Activated B cell treated with CpG ODN at 0.5 μM for 24 hours (primary cell): ENCODE measurements at regions of chr6 and their contacts with region 1.

Region 1: DNA sequence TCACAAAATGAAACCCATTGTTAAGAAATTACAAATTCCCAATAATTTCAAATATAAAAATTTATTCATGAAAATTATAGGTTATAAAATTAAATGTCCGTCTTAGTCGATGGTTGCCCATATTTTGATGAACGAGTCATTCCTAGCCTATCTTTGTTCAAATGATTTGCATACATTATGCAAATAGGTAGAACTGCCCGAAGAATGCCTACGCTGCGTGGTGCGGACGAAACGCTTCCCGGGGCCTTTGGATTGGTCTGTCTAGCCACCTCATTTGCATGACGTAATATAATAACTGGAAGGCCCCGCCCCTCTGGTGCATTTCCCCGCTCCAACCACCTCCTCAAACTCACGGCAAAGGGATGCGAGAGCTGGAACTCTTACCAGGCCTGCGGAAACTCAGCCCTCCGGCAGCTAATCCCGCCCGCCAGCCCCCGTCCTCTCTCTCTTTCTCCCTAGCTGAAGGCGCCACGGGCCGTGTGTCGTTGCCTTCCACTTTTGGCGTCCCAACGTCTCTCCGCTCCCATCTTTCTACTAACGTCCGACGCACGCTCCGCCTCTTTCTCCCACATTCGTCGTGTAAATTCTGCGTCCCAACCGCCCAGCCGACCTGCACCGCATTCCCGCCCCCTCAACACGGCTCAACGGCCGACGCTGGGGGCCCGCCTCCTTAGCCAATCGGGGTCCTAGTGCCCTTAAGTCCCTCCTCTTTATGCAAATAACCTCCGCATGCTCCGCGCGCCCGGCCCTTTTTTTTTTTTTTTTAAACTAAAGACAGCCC is 520 bp upstream of the PRRC2A start:
- DNase-seq: peak; percentile 87
- ATAC-seq: peak; percentile 84
- H3K4me3 Mint-ChIP-seq: peak overlapping the region; percentile 86
- H3K27ac Mint-ChIP-seq: peak overlapping the region; percentile 94
- H3K4me1 Mint-ChIP-seq: peaks cover 46% of the 10 kb centered on the region
- H3K27me3 Mint-ChIP-seq: no peaks in the 10 kb centered on the region
- CTCF ChIP-seq: no peak

Region 2: DNA sequence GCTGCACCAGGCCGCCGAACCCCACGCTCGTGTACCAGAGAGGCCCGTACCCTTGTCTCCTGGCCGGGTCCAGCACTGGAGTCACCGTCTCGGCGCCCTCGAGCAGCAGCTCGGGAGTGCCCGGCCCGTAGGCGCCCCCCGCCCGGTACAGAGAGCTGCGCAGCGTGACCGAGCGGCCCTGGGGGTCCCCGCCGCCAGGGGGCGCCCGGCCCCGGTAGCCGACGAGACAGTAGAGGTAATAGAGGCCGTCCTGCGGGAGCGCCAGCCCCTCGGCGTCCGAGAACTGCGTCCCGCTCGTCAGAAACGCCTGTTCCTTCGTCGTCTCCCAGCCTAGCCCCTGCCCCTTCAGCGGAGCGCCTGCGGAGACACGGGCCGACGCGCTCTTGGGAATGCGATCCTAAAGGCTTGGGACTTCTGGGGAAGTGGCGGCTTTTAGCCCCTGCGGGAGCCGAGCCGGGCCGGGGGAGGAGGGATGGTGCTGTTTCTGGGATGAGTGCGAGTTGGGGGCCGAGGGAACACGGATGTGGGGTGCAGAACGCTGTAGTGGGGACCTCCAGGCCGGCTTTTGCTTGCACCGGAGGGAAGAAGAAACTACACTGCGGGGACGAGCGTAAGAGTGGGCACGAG is 39.1 kb before region 1 on chr6:
- CTCF ChIA-PET with region 1: no interaction called
- POLR2A ChIA-PET with region 1: interaction called, 4 read pairs
- intact Hi-C with region 1: loop called (anchors 2 kb)
- DNase-seq: peak; percentile 94
- ATAC-seq: peak; percentile 71
- H3K4me3 Mint-ChIP-seq: peak overlapping the region; percentile 99
- H3K27ac Mint-ChIP-seq: peak overlapping the region; percentile 94
- H3K4me1 Mint-ChIP-seq: peaks cover 83% of the 10 kb centered on the region
- H3K27me3 Mint-ChIP-seq: no peaks in the 10 kb centered on the region
- CTCF ChIP-seq: peak; percentile 91

Region 3: GRCh38 chr6:31680840-31681671 is 61.1 kb after region 1 on chr6 and contains the start of gene LY6G5C:
- CTCF ChIA-PET with region 1: no interaction called
- POLR2A ChIA-PET with region 1: no interaction called
- intact Hi-C with region 1: no loop called
- DNase-seq: peak; percentile 46
- ATAC-seq: peak; percentile 75
- H3K4me3 Mint-ChIP-seq: peak within 1 kb of the TSS; percentile 84
- H3K27ac Mint-ChIP-seq: peak within 1 kb of the TSS; percentile 72
- H3K4me1 Mint-ChIP-seq: peaks cover 40% of the 10 kb centered on the region
- H3K27me3 Mint-ChIP-seq: no peaks in the 10 kb centered on the region
- CTCF ChIP-seq: no peak
- total RNA-seq, gene LY6G5C: 0.29 and 0.73 TPM in 2 replicates

Region 4: DNA sequence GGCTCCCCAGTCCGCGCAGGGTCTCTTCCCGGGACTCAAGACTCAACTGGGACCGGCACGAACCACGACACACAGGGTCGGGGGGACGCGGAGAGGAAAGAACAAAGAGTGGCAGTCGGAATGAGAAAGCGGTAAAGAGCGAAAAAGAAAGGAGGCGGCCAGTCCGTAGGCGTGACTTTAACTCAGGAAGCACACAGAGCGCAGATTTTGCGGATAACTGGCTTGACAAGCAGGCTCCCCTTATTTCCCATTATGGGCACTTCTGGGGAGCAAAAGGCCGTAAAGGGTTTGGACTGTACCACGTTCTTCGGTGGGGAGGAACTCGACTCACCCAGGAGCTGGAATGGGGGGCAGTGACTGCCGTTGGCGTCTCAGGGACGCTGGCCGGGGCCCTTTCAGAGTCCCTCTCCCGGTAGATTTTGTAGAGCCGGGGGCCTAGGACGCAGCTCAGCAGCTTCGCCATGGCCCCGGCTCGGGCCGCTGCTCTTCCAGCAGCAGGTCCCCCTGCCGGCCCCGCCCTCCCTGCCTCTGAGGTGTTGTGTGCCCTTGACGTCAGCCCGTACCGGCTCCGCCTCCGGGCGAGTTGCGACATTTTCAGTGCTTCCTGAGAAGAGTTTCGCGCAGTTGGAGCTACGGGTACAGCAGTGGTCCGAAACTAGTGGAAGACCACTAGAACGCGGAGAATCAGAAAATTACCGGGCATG is 83.0 kb after region 1 on chr6 and contains the start of gene ABHD16A:
- CTCF ChIA-PET with region 1: no interaction called
- POLR2A ChIA-PET with region 1: interaction called, 6 read pairs
- intact Hi-C with region 1: loop called (anchors 1 kb)
- DNase-seq: peak; percentile 94
- ATAC-seq: peak; percentile 93
- H3K4me3 Mint-ChIP-seq: peak within 1 kb of the TSS; percentile 99
- H3K27ac Mint-ChIP-seq: peak within 1 kb of the TSS; percentile 89
- H3K4me1 Mint-ChIP-seq: peaks cover 28% of the 10 kb centered on the region
- H3K27me3 Mint-ChIP-seq: no peaks in the 10 kb centered on the region
- CTCF ChIP-seq: no peak
- total RNA-seq, gene ABHD16A: 49.3 and 59.1 TPM in 2 replicates

Region 5: GRCh38 chr6:31862344-31863227 is 242.6 kb after region 1 on chr6 and contains the start of gene NEU1:
- CTCF ChIA-PET with region 1: no interaction called
- POLR2A ChIA-PET with region 1: no interaction called
- intact Hi-C with region 1: loop called (anchors 1 kb)
- DNase-seq: peak; percentile 93
- ATAC-seq: peak; percentile 91
- H3K4me3 Mint-ChIP-seq: peak within 1 kb of the TSS; percentile 95
- H3K27ac Mint-ChIP-seq: peak within 1 kb of the TSS; percentile 93
- H3K4me1 Mint-ChIP-seq: peaks cover 21% of the 10 kb centered on the region
- H3K27me3 Mint-ChIP-seq: no peaks in the 10 kb centered on the region
- CTCF ChIP-seq: no peak
- total RNA-seq, gene NEU1: 18.3 and 19.2 TPM in 2 replicates

Region 6: DNA sequence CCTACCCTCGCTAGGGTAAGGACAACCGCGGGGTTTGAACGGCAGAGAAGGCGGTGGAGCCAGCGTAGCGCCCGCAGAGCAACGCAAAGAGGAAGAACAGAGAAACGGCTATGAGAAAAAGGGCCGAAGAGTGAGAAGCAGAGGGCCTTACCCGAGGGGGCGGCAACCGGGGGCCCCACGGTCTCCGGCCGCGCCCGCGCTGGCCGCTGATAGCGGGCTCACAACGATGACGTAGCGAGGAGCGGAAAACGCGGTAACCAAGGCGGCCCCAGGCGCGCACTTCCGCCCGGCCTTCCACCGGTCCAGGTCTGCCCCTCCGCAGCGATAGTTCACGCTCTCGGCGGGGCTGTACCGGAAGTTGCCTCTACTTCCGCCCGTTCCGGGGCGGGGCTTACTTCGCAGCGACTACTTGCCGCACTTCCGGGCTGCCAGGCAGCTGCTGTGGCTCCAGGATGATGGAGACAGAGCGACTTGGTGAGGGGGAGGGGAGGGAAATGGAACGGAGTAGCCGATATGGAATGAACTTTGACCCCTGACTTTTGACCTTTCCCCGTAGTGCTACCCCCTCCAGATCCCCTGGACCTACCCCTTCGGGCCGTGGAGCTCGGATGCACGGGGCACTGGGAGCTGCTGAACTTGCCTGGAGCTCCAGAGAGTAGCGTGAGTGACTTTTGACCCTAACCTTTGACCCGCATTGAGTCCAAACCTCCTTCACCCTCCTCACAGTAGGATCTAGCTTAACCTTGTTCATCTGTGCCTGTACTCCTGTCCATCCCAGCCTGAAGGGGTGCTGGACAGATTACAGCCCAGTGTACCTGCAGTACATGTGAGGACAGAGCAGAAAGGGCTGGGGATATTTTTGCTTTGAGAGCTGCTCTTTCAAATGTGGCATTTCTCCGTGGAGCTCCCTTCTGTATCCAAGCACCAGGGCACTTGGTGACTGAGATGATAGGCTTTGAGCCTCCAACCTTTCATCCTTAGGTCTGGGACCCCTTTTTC is 339.0 kb after region 1 on chr6 and contains the starts of genes NELFE and SKIC2:
- CTCF ChIA-PET with region 1: no interaction called
- POLR2A ChIA-PET with region 1: interaction called, 5 read pairs
- intact Hi-C with region 1: loop called (anchors 2 kb)
- DNase-seq: peak; percentile 96
- ATAC-seq: peak; percentile 98
- H3K4me3 Mint-ChIP-seq: peak within 1 kb of the TSS; percentile 95
- H3K27ac Mint-ChIP-seq: peak within 1 kb of the TSS; percentile 94
- H3K4me1 Mint-ChIP-seq: peaks cover 33% of the 10 kb centered on the region
- H3K27me3 Mint-ChIP-seq: no peaks in the 10 kb centered on the region
- CTCF ChIP-seq: no peak
- total RNA-seq, gene NELFE: 57.9 and 63.3 TPM in 2 replicates
- total RNA-seq, gene SKIC2: 95.8 and 102 TPM in 2 replicates

Region 7: DNA sequence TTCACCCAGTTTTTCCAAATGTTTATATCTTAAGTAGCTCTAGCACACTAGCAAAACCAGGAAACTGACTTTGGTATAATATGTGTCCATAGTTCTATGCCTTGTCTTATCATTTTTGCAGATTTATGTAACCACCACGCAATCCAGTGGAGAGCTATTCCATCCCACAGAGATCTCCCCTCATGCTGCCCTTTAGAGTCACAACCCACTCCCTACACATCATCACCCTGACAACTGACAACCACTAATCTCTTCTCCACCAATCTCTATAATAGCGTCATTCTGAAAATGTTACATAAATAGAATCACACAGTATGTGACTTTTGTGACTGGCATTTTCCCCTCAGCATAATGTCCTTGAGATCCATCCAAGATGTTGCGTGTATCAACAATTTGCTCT is 881.0 kb after region 1 on chr6:
- CTCF ChIA-PET with region 1: no interaction called
- POLR2A ChIA-PET with region 1: no interaction called
- intact Hi-C with region 1: no loop called
- DNase-seq: no peak
- ATAC-seq: no peak
- H3K4me3 Mint-ChIP-seq: no peak overlapping the region
- H3K27ac Mint-ChIP-seq: no peak overlapping the region
- H3K4me1 Mint-ChIP-seq: peaks cover 16% of the 10 kb centered on the region
- H3K27me3 Mint-ChIP-seq: no peaks in the 10 kb centered on the region
- CTCF ChIP-seq: no peak